B cell (primary cell): ENCODE measurements at regions of chr7 and their contacts with region 1.

Region 1: GRCh38 chr7:149422129-149422913 is 38.5 kb downstream of the ZNF777 start:
- DNase-seq: peak; percentile 89
- ATAC-seq: peak; percentile 98
- H3K4me3 ChIP-seq: peak overlapping the region; percentile 58 to 71 (median 60)
- H3K4me3 Mint-ChIP-seq: peak overlapping the region; percentile 83
- H3K27ac ChIP-seq: peak overlapping the region; percentile 20 to 73
- H3K27ac Mint-ChIP-seq: peak overlapping the region; percentile 81
- H3K4me1 ChIP-seq: peaks cover 10 to 12% of the 10 kb centered on the region in 2 donors
- H3K4me1 Mint-ChIP-seq: peaks cover 8% of the 10 kb centered on the region
- H3K27me3 ChIP-seq: no peaks in the 10 kb centered on the region
- H3K27me3 Mint-ChIP-seq: no peaks in the 10 kb centered on the region
- CTCF ChIP-seq: peak; percentile 63

Region 2: GRCh38 chr7:149050941-149051340 is 371.4 kb before region 1 on chr7:
- CTCF ChIA-PET with region 1: no interaction called
- POLR2A ChIA-PET with region 1: no interaction called
- intact Hi-C with region 1: no loop called
- DNase-seq: no peak
- ATAC-seq: no peak
- H3K4me3 ChIP-seq: no peak overlapping the region
- H3K4me3 Mint-ChIP-seq: no peak overlapping the region
- H3K27ac ChIP-seq: no peak overlapping the region
- H3K27ac Mint-ChIP-seq: no peak overlapping the region
- H3K4me1 ChIP-seq: no peaks in the 10 kb centered on the region
- H3K4me1 Mint-ChIP-seq: no peaks in the 10 kb centered on the region
- H3K27me3 ChIP-seq: no peaks in the 10 kb centered on the region
- H3K27me3 Mint-ChIP-seq: peaks cover 5% of the 10 kb centered on the region
- CTCF ChIP-seq: no peak

Region 3: DNA sequence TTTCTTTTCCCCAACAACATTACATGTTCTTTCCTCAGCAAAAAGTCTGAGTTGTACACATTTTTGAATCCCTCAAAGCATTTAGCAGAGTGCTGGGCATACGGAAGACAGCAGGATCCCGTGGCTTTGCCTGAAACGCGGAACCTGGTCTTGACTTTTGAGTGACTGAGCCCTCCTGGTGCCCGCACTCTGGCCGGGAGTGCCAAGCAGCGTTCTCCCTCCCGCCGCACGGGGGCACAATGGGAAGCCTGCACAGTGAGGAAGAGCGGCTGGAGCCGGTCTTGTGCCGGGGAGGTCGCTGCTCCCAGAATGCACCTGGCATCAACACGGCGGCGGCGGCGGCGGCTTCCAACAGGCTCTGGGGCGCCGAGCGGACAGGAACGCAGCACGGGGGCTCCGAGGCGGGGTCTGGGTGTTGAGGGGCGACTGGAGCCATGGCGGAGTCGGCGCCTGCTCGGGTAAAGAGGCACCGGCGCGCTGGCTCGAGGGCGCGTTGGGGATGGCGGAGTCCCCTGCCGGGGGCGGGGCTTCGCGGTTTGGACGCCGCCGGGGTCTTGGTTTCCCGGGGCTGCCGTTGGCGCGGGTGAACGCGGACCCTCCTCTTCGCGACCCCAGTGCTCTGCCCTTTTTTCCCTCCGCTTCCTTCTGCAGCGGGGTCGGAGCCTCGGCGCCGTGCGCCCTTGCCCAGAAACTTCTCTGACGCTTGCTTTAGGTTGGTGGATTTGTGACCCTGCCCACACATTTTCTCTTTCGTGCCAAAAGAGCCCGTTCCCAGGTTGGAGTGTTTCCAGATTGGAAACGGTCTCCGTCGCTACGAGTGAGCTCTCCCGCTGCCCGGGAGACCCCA is 182.8 kb before region 1 on chr7 and contains the start of gene ZNF212:
- CTCF ChIA-PET with region 1: no interaction called
- POLR2A ChIA-PET with region 1: no interaction called
- intact Hi-C with region 1: loop called (anchors 1 kb)
- DNase-seq: peak; percentile 91
- ATAC-seq: peak; percentile 100
- H3K4me3 ChIP-seq: peak within 1 kb of the TSS; percentile 75 to 94 (median 84)
- H3K4me3 Mint-ChIP-seq: peak within 1 kb of the TSS; percentile 95
- H3K27ac ChIP-seq: peak within 1 kb of the TSS; percentile 33 to 73
- H3K27ac Mint-ChIP-seq: peak within 1 kb of the TSS; percentile 93
- H3K4me1 ChIP-seq: peaks cover 17 to 25% of the 10 kb centered on the region in 2 donors
- H3K4me1 Mint-ChIP-seq: peaks cover 28% of the 10 kb centered on the region
- H3K27me3 ChIP-seq: peaks cover 0 to 5% (median 0%) of the 10 kb centered on the region in 4 experiments
- H3K27me3 Mint-ChIP-seq: peaks cover 3% of the 10 kb centered on the region
- CTCF ChIP-seq: peak; percentile 84
- total RNA-seq, gene ZNF212: 22.5 and 25.7 TPM in 2 replicates

Region 4: DNA sequence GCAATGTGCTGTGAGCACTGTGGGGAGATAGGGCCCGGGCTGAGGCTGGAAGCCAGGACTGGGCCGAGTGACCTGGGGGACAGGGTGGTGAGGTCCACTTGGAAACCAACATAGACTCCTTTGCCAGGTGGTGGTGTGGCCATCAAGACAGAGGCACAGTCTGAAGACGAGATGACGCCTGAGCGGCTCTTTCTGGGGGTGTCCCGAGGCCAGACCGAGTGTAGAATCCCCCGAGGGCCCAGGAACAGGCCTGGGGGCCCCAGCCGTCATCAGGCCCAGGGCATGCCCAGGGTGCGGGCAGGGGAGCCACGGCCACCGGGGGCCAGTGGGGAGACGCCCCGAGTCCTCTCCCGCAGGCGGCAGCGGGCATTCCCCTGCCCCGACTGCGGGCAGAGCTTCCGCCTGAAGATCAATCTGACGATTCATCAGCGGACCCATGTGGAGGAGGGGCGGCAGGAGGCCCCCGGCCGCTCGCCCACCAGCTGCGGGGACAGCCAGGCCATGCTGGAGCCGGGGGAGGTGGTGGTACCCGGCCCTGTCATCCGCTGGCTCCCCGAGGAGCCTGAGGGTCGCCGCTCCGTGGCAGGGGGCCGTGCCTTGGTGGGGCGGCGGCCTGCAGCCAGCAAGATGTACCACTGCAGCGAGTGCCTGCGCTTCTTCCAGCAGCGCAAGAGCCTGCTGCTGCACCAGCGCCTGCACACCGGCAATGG is 140.8 kb before region 1 on chr7:
- CTCF ChIA-PET with region 1: no interaction called
- POLR2A ChIA-PET with region 1: no interaction called
- intact Hi-C with region 1: no loop called
- DNase-seq: no peak
- ATAC-seq: no peak
- H3K4me3 ChIP-seq: no peak overlapping the region
- H3K4me3 Mint-ChIP-seq: no peak overlapping the region
- H3K27ac ChIP-seq: no peak overlapping the region
- H3K27ac Mint-ChIP-seq: no peak overlapping the region
- H3K4me1 ChIP-seq: peaks cover 14 to 21% of the 10 kb centered on the region in 2 donors
- H3K4me1 Mint-ChIP-seq: peaks cover 23% of the 10 kb centered on the region
- H3K27me3 ChIP-seq: no peaks in the 10 kb centered on the region
- H3K27me3 Mint-ChIP-seq: no peaks in the 10 kb centered on the region
- CTCF ChIP-seq: no peak

Region 5: GRCh38 chr7:149310113-149310836 is 112.0 kb before region 1 on chr7:
- CTCF ChIA-PET with region 1: interaction called, 12 read pairs
- POLR2A ChIA-PET with region 1: no interaction called
- intact Hi-C with region 1: no loop called
- DNase-seq: peak; percentile 50
- ATAC-seq: peak; percentile 63
- H3K4me3 ChIP-seq: no peak overlapping the region
- H3K4me3 Mint-ChIP-seq: no peak overlapping the region
- H3K27ac ChIP-seq: no peak overlapping the region
- H3K27ac Mint-ChIP-seq: no peak overlapping the region
- H3K4me1 ChIP-seq: no peaks in the 10 kb centered on the region
- H3K4me1 Mint-ChIP-seq: no peaks in the 10 kb centered on the region
- H3K27me3 ChIP-seq: no peaks in the 10 kb centered on the region
- H3K27me3 Mint-ChIP-seq: peaks cover 3% of the 10 kb centered on the region
- CTCF ChIP-seq: peak; percentile 56

Region 6: DNA sequence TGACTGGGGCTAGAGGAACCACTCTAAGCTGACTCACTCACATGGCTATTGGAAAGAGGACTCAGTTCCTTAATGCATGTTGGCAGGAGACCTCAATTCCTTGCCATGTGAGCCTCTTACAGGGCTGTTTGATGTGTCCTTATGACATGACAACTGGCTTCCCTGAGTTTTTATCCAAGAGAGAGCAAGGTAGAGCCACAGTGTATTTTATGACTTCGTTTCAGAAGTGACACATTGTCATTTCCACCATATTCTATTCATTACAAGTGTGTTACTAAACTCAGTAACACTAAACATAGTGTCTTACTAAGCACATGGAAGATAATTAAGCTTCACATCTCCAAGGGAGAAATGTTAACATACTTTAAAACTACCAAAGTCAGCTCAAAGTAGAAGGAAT is 59.6 kb before region 1 on chr7:
- CTCF ChIA-PET with region 1: no interaction called
- POLR2A ChIA-PET with region 1: no interaction called
- intact Hi-C with region 1: no loop called
- DNase-seq: no peak
- ATAC-seq: no peak
- H3K4me3 ChIP-seq: no peak overlapping the region
- H3K4me3 Mint-ChIP-seq: no peak overlapping the region
- H3K27ac ChIP-seq: no peak overlapping the region
- H3K27ac Mint-ChIP-seq: no peak overlapping the region
- H3K4me1 ChIP-seq: no peaks in the 10 kb centered on the region
- H3K4me1 Mint-ChIP-seq: no peaks in the 10 kb centered on the region
- H3K27me3 ChIP-seq: peaks cover 0 to 4% (median 0%) of the 10 kb centered on the region in 4 experiments
- H3K27me3 Mint-ChIP-seq: peaks cover 14% of the 10 kb centered on the region
- CTCF ChIP-seq: no peak

Region 7: GRCh38 chr7:149497456-149498261 is 75.3 kb after region 1 on chr7 and contains the start of gene ZNF746:
- CTCF ChIA-PET with region 1: interaction called, 3 read pairs
- POLR2A ChIA-PET with region 1: no interaction called
- intact Hi-C with region 1: loop called (anchors 1 kb)
- DNase-seq: peak; percentile 89
- ATAC-seq: peak; percentile 96
- H3K4me3 ChIP-seq: peak within 1 kb of the TSS; percentile 27 to 87 (median 60)
- H3K4me3 Mint-ChIP-seq: peak within 1 kb of the TSS; percentile 93
- H3K27ac ChIP-seq: peak within 1 kb of the TSS in 1 of 2 donors; percentile 78
- H3K27ac Mint-ChIP-seq: peak within 1 kb of the TSS; percentile 92
- H3K4me1 ChIP-seq: peaks cover 12 to 19% of the 10 kb centered on the region in 2 donors
- H3K4me1 Mint-ChIP-seq: peaks cover 23% of the 10 kb centered on the region
- H3K27me3 ChIP-seq: no peaks in the 10 kb centered on the region
- H3K27me3 Mint-ChIP-seq: no peaks in the 10 kb centered on the region
- CTCF ChIP-seq: peak; percentile 43
- total RNA-seq, gene ZNF746: 30.4 and 32.2 TPM in 2 replicates

Region 8: DNA sequence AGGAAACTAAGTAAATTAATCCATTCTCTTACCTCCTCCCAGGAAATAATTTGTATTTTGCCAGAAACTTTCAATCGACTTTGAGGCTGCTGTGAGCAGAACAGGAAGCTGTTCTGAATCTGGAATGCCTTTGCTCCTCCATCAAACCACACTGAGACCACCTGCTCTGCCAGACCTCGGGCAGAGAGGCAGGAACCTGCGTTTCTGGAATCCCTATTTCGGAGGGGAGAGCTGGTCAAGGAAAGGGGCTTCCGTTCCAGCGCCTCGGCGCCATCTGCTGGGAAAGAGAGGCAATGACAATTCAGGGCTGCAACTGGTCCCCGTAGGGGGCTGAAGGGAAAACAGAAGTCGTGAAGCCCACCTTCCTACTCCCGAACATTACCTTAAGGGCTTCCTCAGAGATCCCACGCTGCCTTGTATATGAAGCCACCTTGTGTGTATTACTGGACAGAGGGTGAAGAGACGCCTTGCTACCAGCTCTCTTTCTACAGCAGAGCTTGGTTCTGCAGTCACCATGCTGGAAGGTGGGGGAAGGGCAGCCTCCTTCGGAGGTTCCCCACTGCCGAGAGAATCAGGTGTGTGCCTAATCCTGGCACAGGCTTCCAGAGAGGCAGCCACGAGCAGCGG is 319.9 kb after region 1 on chr7:
- CTCF ChIA-PET with region 1: interaction called, 4 read pairs
- POLR2A ChIA-PET with region 1: no interaction called
- intact Hi-C with region 1: loop called (anchors 1 kb)
- DNase-seq: peak; percentile 77
- ATAC-seq: peak; percentile 80
- H3K4me3 ChIP-seq: peak overlapping the region; percentile 21 to 57 (median 44)
- H3K4me3 Mint-ChIP-seq: peak overlapping the region; percentile 89
- H3K27ac ChIP-seq: no peak overlapping the region
- H3K27ac Mint-ChIP-seq: no peak overlapping the region
- H3K4me1 ChIP-seq: peaks cover 9 to 11% of the 10 kb centered on the region in 2 donors
- H3K4me1 Mint-ChIP-seq: peaks cover 10% of the 10 kb centered on the region
- H3K27me3 ChIP-seq: peaks cover 0 to 24% (median 0%) of the 10 kb centered on the region in 4 experiments
- H3K27me3 Mint-ChIP-seq: peaks cover 37% of the 10 kb centered on the region
- CTCF ChIP-seq: peak; percentile 89